ENCODE measurements at regions of chr2 and their contacts with region 1.

Region 1: DNA sequence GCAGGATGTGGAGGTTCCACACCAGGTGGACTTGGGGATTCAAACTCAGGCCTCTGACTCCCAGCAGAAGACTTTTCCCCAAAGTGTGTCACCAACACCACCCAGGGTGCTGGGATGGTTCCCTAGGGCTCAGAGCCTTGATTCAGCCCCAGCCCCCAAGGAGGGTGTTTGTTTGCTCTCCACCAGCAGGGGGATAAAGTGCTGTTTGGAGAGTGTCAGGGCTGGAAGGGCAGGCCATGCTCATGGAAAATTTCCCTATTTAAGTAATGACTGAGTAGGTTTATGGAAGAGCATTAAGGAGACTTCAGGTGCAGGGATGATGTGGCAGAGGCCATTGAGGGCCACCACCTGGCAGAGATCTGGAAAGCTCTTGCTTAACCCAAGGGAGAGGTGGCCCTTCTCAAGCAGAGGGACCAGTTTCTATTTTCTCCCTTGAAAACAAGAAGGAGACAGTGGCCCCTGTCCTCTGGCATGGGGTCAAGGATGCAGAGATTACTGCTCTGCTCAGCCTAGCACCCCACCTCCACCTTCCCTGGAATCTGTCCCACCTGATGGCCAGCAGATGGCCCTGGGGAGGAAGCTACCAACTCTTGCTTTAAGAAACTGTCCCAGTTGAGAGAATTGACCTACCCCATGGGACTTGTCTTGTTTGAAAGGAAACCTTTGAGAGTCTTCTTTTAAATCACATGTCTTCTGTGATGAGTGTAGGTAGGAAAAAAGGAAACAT is 122.1 kb downstream of the ACOXL start:
- DNase-seq: peak in 1 of 35 experiments; percentile 30
- ATAC-seq: no peak
- H3K4me3 ChIP-seq: no peak overlapping the region
- H3K4me3 Mint-ChIP-seq: no peak overlapping the region
- H3K27ac ChIP-seq: no peak overlapping the region
- H3K27ac Mint-ChIP-seq: peak overlapping the region; percentile 49 to 57
- H3K4me1 ChIP-seq: peaks cover 44 to 57% of the 10 kb centered on the region in 2 experiments
- H3K4me1 Mint-ChIP-seq: peaks cover 50 to 65% (median 54%) of the 10 kb centered on the region in 3 donors
- H3K27me3 ChIP-seq: peaks cover 0 to under 1% of the 10 kb centered on the region in 2 experiments
- H3K27me3 Mint-ChIP-seq: peaks cover 3 to 4% of the 10 kb centered on the region in 2 donors

Region 2: DNA sequence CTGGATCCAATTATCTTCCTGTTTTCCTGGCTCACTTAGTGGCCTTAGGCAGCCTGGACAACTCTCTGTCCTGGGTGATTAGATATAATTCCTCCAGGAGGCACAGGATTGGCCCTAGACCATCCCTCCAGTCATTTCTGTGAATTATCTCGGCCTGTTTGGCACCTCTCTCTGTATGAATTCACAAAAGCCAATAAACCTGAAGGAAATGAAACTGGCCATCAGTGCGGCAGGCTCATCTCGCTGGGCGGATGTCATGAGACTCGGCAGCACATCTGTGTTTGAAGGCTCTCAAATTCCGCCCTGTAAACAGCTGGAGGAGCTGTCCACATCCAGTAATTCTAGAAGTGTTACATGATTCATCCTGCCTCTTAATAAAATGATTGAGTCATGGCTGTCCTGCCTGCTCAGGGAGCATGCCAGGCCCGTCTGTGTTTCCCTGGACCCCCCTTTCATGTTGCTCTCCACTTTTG is 83.5 kb before region 1 on chr2:
- CTCF ChIA-PET with region 1: no interaction called
- POLR2A ChIA-PET with region 1: no interaction called
- DNase-seq: no peak
- ATAC-seq: no peak
- H3K4me3 ChIP-seq: no peak overlapping the region
- H3K4me3 Mint-ChIP-seq: no peak overlapping the region
- H3K27ac ChIP-seq: no peak overlapping the region
- H3K27ac Mint-ChIP-seq: no peak overlapping the region
- H3K4me1 ChIP-seq: no peaks in the 10 kb centered on the region
- H3K4me1 Mint-ChIP-seq: no peaks in the 10 kb centered on the region
- H3K27me3 ChIP-seq: peaks cover 0 to 22% of the 10 kb centered on the region in 2 experiments
- H3K27me3 Mint-ChIP-seq: peaks cover 17 to 42% of the 10 kb centered on the region in 2 donors

Region 3: DNA sequence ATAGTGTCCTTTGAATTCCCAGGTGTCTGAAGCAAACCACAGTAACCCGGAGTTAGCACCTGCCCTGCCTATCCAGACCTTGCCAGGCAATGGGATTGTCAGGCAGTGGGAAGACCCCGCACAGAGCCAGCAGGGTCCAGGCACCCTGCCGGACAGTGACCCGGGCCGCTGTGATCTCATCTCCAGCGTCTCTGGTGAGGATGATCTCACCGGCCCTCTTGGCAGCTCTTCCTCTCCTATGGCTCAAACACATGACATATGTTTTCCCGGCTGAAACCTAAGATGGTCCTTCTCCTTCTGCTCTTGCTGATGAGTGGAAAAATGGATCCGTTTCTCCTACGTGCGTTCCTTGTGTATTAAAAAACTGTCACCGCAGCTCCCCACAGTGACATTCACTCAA is 47.0 kb before region 1 on chr2:
- CTCF ChIA-PET with region 1: interaction called, 4 to 5 read pairs
- POLR2A ChIA-PET with region 1: interaction called in 1 of 2 experiments, 10 read pairs
- DNase-seq: no peak
- ATAC-seq: no peak
- H3K4me3 ChIP-seq: no peak overlapping the region
- H3K4me3 Mint-ChIP-seq: no peak overlapping the region
- H3K27ac ChIP-seq: no peak overlapping the region
- H3K27ac Mint-ChIP-seq: no peak overlapping the region
- H3K4me1 ChIP-seq: peaks cover 0 to 8% of the 10 kb centered on the region in 2 experiments
- H3K4me1 Mint-ChIP-seq: peaks cover 12 to 19% (median 15%) of the 10 kb centered on the region in 3 donors
- H3K27me3 ChIP-seq: peaks cover 0 to 9% of the 10 kb centered on the region in 2 experiments
- H3K27me3 Mint-ChIP-seq: peaks cover 13 to 25% of the 10 kb centered on the region in 2 donors

Region 4: GRCh38 chr2:110886826-110887573 is 32.5 kb after region 1 on chr2:
- CTCF ChIA-PET with region 1: no interaction called
- POLR2A ChIA-PET with region 1: no interaction called
- DNase-seq: no peak
- ATAC-seq: no peak
- H3K4me3 ChIP-seq: no peak overlapping the region
- H3K4me3 Mint-ChIP-seq: no peak overlapping the region
- H3K27ac ChIP-seq: no peak overlapping the region
- H3K27ac Mint-ChIP-seq: no peak overlapping the region
- H3K4me1 ChIP-seq: no peaks in the 10 kb centered on the region
- H3K4me1 Mint-ChIP-seq: no peaks in the 10 kb centered on the region
- H3K27me3 ChIP-seq: no peaks in the 10 kb centered on the region
- H3K27me3 Mint-ChIP-seq: peaks cover 12 to 20% of the 10 kb centered on the region in 2 donors

Region 5: GRCh38 chr2:111624401-111625156 is 770.1 kb after region 1 on chr2:
- CTCF ChIA-PET with region 1: interaction called in 1 of 2 experiments, 13 read pairs
- POLR2A ChIA-PET with region 1: no interaction called
- DNase-seq: no peak
- ATAC-seq: no peak
- H3K4me3 ChIP-seq: no peak overlapping the region
- H3K4me3 Mint-ChIP-seq: no peak overlapping the region
- H3K27ac ChIP-seq: no peak overlapping the region
- H3K27ac Mint-ChIP-seq: no peak overlapping the region
- H3K4me1 ChIP-seq: peaks cover 0 to 3% of the 10 kb centered on the region in 2 experiments
- H3K4me1 Mint-ChIP-seq: peaks cover 0 to 7% (median 0%) of the 10 kb centered on the region in 3 donors
- H3K27me3 ChIP-seq: peaks cover 0 to 3% of the 10 kb centered on the region in 2 experiments
- H3K27me3 Mint-ChIP-seq: peaks cover 0 to 7% of the 10 kb centered on the region in 2 donors

Measured in T-cell (primary cell).